CD4-positive, alpha-beta T cell (primary cell): ENCODE measurements at regions of chr1 and their contacts with region 1.

Region 1: DNA sequence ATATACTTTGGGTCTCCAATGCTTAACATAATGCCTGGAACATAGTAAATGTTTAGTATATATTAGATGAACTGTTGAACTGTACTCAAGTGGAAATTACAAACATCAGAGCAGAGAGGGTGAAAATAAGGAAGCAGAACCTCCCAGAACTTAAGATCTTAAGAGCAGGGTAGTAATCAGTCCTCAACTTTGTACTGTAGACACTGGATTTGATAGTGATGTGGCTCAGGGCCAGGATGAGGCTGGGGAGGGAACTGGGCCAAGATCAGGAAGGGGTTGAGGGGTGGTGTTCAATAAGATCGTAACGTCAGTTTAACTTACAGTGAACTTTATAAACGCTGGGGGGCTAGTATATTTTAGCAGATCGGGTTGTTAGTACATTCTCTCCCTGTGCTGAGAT is 15.4 kb downstream of the MPZL1 start:
- DNase-seq: no peak
- ATAC-seq: no peak
- H3K4me3 ChIP-seq: no peak overlapping the region
- H3K4me3 Mint-ChIP-seq: no peak overlapping the region
- H3K27ac ChIP-seq: no peak overlapping the region
- H3K27ac Mint-ChIP-seq: no peak overlapping the region
- H3K4me1 ChIP-seq: no peaks in the 10 kb centered on the region
- H3K4me1 Mint-ChIP-seq: no peaks in the 10 kb centered on the region
- H3K27me3 ChIP-seq: no peaks in the 10 kb centered on the region
- H3K27me3 Mint-ChIP-seq: no peaks in the 10 kb centered on the region
- CTCF ChIP-seq: no peak

Region 2: DNA sequence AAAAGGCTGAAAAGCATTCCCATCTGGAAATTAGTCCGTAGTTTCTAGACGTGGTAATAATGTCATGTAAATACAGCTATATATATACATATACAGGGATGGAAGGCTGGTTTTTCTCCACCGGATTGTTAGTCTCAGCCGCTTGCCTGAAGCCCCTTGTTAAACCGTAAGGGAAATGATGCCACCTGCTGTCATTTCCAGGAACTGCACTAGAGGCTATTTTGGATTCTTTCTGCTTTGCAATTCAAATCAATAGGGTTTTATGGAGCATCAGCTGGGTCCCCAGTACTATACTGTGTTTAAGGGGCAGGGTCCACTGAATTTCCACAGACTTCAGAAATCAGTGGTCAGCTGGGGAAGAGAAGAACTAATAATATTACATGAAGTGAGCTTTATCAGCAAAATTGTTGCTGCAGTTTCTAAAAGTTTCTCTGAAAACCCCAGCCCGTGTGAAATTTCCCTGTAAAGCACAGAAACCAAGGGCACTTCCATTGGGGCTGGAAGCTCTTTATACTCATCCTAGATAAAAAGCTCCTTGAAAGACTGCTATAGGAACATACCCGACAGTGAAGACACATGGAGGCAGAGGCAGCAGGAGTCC is 49.1 kb before region 1 on chr1:
- CTCF ChIA-PET with region 1: no interaction called
- POLR2A ChIA-PET with region 1: no interaction called
- intact Hi-C with region 1: no loop called
- DNase-seq: peak; percentile 40 to 89 (median 74)
- ATAC-seq: peak; percentile 85
- H3K4me3 ChIP-seq: no peak overlapping the region
- H3K4me3 Mint-ChIP-seq: no peak overlapping the region
- H3K27ac ChIP-seq: no peak overlapping the region
- H3K27ac Mint-ChIP-seq: peak overlapping the region; percentile 21
- H3K4me1 ChIP-seq: peaks cover 16% of the 10 kb centered on the region
- H3K4me1 Mint-ChIP-seq: peaks cover 11% of the 10 kb centered on the region
- H3K27me3 ChIP-seq: no peaks in the 10 kb centered on the region
- H3K27me3 Mint-ChIP-seq: no peaks in the 10 kb centered on the region
- CTCF ChIP-seq: peak; percentile 92

Region 3: DNA sequence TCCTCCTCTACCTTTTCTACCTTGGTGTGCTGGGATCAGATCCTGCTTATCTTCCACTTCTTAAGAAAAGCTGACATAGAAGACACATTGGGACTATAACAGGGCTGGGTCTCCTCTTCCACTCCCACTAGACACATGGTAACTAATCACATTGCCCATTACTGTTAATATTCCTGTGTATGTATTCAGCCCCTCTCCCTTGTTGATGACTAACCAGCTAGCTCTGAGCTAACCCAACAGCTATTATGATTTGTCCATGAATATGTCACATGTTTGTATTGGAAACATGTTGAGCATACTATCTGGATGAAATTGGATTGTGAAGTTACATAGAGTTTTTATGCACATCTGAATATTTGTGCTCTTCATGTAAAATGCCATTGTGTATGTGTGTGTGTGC is 37.5 kb after region 1 on chr1:
- CTCF ChIA-PET with region 1: no interaction called
- POLR2A ChIA-PET with region 1: no interaction called
- intact Hi-C with region 1: loop called in 1 of 2 experiments (anchors 5 kb)
- DNase-seq: no peak
- ATAC-seq: no peak
- H3K4me3 ChIP-seq: no peak overlapping the region
- H3K4me3 Mint-ChIP-seq: no peak overlapping the region
- H3K27ac ChIP-seq: no peak overlapping the region
- H3K27ac Mint-ChIP-seq: no peak overlapping the region
- H3K4me1 ChIP-seq: no peaks in the 10 kb centered on the region
- H3K4me1 Mint-ChIP-seq: peaks cover 13% of the 10 kb centered on the region
- H3K27me3 ChIP-seq: no peaks in the 10 kb centered on the region
- H3K27me3 Mint-ChIP-seq: no peaks in the 10 kb centered on the region
- CTCF ChIP-seq: no peak